ENCODE measurements at regions of chr2 and their contacts with region 1.

Region 1: GRCh38 chr2:48420512-48421197 is 109.3 kb upstream of the STON1 start:
- DNase-seq: peak; percentile 90 to 95
- H3K4me3 ChIP-seq: no peak overlapping the region
- H3K27ac ChIP-seq: peak overlapping the region in 2 of 5 donors; percentile 23 to 24
- H3K4me1 ChIP-seq: peaks cover 6 to 16% (median 8%) of the 10 kb centered on the region in 4 donors
- H3K27me3 ChIP-seq: no peaks in the 10 kb centered on the region
- CTCF ChIP-seq: peak in 6 of 7 experiments; percentile 92 to 99 (median 97)
- EP300 ChIP-seq: no peak
- POLR2A ChIP-seq: no peak

Region 2: DNA sequence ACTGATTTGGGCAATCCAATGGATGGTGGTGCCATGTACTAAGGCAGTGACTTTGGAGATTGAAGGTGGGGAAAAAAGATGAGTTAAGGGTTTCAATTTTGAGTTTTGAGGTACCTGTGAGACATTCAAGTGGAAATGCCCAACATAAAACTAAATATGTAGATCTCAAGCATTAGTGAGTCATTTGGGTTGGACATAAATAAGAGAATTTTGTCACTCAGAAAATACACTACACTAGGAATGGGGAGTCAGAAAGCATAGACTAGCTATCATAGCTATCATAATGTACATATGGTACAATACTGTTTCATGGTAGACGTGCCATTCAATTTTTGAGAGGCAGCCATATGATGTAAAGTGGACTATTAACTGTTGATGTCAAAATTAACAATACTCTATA is 570.5 kb before region 1 on chr2:
- intact Hi-C with region 1: loop called (anchors 10 kb)
- DNase-seq: no peak
- H3K4me3 ChIP-seq: no peak overlapping the region
- H3K27ac ChIP-seq: no peak overlapping the region
- H3K4me1 ChIP-seq: peaks cover 0 to 52% (median 17%) of the 10 kb centered on the region in 4 donors
- H3K27me3 ChIP-seq: no peaks in the 10 kb centered on the region
- CTCF ChIP-seq: no peak
- EP300 ChIP-seq: no peak
- POLR2A ChIP-seq: no peak

Region 3: GRCh38 chr2:48991415-48992131 is 570.9 kb after region 1 on chr2:
- intact Hi-C with region 1: no loop called
- DNase-seq: no peak
- H3K4me3 ChIP-seq: no peak overlapping the region
- H3K27ac ChIP-seq: no peak overlapping the region
- H3K4me1 ChIP-seq: no peaks in the 10 kb centered on the region
- H3K27me3 ChIP-seq: no peaks in the 10 kb centered on the region
- CTCF ChIP-seq: no peak
- EP300 ChIP-seq: no peak
- POLR2A ChIP-seq: no peak

Measured in stomach (tissue), 19 donors.